ENCODE measurements at regions of chr14 and their contacts with region 1.

Region 1: DNA sequence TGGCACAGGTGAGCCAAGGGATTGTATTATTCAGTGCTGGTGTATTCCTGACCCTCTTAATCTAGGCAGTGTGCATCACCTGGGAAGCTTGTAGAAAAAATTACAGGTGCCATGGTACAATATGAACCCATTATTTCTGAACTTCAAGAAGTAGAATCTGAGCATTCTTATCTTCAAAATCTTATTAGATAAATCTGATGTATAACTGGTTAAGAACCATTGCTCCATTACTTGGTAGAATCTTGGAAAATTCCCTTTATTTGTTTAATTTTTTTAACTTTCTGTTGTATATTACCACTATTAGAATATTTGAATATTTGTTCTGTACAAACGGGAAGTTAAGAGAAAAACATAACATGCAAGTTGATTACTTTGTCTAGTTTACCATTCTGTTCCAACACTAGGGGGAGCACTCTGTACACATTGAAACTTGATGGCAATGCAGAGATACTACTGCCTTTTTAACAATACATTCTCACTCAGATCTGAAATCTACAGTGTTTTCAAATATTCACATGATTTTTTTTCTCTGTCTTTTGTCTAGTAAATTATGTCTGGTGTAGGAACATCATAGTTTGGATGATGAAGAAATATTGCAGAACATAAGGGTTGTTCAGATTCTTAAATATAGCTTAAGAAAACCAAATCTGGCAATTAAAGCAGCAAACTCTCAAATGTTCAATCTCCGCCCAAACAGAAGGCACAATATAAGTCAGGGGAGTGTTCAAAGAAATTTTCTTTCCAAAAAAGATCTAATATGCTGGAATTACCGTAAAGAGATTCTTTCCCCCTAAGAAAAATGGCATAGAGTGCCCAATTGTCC is 196.6 kb downstream of the PCNX1 start:
- DNase-seq: no peak
- H3K4me3 Mint-ChIP-seq: no peak overlapping the region
- H3K27ac Mint-ChIP-seq: no peak overlapping the region
- H3K4me1 Mint-ChIP-seq: no peaks in the 10 kb centered on the region
- H3K27me3 Mint-ChIP-seq: no peaks in the 10 kb centered on the region

Region 2: GRCh38 chr14:71086567-71086966 is 17.3 kb before region 1 on chr14:
- CTCF ChIA-PET with region 1: no interaction called
- DNase-seq: no peak
- H3K4me3 Mint-ChIP-seq: no peak overlapping the region
- H3K27ac Mint-ChIP-seq: no peak overlapping the region
- H3K4me1 Mint-ChIP-seq: no peaks in the 10 kb centered on the region
- H3K27me3 Mint-ChIP-seq: no peaks in the 10 kb centered on the region

Region 3: DNA sequence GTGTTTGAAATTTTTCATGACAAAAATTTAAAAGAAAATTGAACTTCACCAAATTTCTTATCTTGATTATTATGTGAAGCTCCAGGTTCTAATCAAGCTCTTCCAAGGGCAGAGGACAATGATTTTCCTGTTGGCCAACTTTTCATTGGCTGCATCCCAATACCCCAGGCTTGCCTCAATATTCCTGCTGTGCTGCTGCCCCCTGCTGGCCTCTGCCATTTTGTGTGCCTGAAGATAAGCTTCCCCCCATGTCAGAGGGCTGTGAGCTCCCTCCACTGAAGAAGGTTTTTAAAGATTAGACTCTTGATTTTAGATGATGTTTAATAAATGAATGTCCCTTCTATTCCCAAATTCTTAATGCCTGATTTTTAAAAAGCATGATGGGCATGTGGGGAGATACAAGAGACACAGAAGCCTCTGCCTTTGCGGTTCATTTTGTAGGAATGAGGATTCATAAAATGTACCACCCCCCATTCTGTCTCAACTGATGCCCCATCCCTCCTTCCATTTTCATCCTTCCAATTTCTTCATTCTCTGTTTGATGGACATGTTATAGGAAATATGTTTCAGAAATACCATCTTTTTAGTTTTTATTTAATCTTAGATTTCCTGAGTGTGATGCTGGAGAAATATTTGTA is 751.6 kb after region 1 on chr14:
- CTCF ChIA-PET with region 1: interaction called, 11 read pairs
- DNase-seq: peak; percentile 69
- H3K4me3 Mint-ChIP-seq: no peak overlapping the region
- H3K27ac Mint-ChIP-seq: no peak overlapping the region
- H3K4me1 Mint-ChIP-seq: peaks cover 9% of the 10 kb centered on the region
- H3K27me3 Mint-ChIP-seq: peaks cover 24% of the 10 kb centered on the region